AG04449 (cell line): ENCODE measurements at regions of chr7 and their contacts with region 1.

Region 1: GRCh38 chr7:134632937-134633540 is 13.6 kb upstream of the BPGM start:
- DNase-seq: no peak
- H3K4me3 ChIP-seq: no peak overlapping the region
- CTCF ChIP-seq: peak; percentile 50

Region 2: GRCh38 chr7:134619627-134620331 is 13.3 kb before region 1 on chr7:
- CTCF ChIA-PET with region 1: interaction called, 35 read pairs
- POLR2A ChIA-PET with region 1: interaction called, 3 read pairs
- DNase-seq: peak; percentile 76
- H3K4me3 ChIP-seq: no peak overlapping the region
- CTCF ChIP-seq: no peak

Region 3: DNA sequence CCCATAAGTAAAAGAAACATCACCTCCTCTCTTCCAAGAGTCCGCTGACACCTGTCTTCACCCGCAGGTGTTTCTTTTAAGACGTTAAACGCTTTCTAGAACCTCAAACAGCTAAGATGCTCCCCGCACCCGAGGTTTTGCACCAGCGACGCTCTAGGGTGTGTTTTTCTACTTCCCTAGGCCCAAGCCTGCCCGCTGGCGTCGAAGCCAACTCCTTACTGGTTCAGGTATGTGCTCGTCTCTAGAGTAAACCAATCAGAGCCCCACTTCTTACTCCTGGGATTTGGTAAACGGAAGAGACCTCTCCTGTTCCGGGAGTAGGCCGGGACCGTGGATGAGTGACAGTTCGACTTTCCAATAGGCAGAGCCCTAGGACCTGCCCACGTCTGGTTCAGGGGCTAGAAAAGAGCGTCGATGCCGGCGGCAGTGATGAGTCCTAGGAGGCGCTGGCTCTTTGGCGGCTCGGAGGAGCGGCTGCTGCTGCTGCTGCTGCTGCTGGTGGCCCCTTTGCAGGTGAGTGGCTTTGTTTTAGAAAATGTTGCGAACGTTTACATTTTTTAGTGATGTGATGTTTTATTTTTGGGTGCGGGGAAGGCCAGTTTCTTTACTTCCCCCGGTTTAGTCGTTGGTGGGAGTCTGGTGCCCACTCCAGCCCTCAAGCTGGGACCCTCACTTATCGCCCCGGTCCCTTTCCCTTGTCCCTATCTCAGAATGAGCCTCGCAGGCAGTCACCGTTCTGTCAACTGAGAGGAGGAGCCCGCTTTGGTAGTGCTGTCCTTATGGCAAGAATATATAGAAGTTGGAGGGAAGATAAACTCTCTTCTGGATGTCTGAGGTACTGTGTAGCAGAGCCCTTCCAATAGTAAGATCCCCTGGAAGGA is 13.6 kb after region 1 on chr7 and contains the start of gene BPGM:
- CTCF ChIA-PET with region 1: interaction called, 130 read pairs
- POLR2A ChIA-PET with region 1: interaction called, 10 read pairs
- DNase-seq: peak; percentile 100
- H3K4me3 ChIP-seq: peak within 1 kb of the TSS; percentile 83
- CTCF ChIP-seq: peak; percentile 54

Region 4: DNA sequence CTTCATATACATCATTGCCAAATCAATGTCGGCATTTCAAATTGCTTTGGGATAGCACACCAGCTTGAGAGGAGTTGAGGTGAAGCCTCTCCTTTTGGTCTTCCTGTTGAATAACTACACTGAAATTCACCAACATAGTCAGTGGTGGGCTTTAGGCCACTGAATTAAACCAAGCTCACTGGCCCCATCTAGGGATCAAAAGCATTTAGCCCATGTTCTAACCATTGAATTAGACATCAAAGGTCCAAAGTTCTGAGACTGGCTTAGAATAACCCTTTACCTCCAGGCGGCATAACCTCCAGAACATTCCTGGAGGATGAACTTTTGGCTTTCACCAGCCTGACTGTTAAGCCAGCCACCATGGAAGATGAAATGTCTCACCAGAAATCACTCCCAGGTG is 68.2 kb after region 1 on chr7:
- CTCF ChIA-PET with region 1: interaction called, 33 read pairs
- POLR2A ChIA-PET with region 1: no interaction called
- DNase-seq: no peak
- H3K4me3 ChIP-seq: no peak overlapping the region
- CTCF ChIP-seq: no peak

Region 5: DNA sequence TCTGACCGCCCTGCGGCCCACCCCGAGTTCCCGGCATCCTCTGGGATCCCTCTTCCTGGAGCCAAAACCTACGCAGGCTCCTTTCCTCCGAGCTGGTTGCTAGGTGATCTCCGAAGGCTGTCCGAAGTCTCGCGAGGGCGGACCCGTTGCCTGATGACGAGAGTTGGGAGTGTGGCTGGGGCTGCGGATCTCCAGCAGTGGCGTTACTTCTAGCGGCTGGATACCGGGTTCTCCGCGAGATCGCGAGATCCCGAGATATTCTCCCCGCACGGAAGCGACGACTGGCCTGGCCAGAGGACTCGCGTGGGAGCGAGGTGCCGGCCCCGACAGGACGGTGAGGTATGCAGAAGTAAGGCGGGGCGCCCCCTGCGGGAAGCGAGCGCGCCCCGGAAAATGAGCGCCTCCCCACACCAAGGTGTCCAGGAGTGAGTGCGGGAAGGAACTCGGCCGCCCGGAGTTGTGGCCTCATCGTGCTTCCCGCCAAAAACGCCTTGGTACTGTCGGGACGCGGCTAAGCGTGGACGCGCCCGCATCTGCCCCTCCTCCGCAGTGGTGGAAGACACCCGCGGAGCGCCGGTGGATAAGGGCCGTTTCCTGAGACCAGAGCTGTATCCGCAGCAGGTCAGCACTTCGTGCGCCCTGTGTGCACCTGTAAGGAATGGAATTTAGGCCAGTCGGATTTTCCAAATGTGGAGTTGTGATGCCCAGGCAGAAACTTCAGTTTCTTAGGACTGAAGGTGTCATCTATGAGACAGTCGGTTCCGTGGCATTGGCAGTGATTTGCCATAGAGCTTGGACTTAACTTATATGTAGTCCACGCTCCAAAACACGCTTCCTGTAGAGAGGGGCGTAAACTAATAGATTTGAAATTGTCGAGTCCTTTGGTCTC is 353.6 kb after region 1 on chr7 and contains the start of gene AGBL3:
- CTCF ChIA-PET with region 1: interaction called, 13 read pairs
- POLR2A ChIA-PET with region 1: no interaction called
- DNase-seq: peak; percentile 47
- H3K4me3 ChIP-seq: peak within 1 kb of the TSS; percentile 87
- CTCF ChIP-seq: peak; percentile 67